ENCODE measurements at regions of chr10 and their contacts with region 1.

Region 1: DNA sequence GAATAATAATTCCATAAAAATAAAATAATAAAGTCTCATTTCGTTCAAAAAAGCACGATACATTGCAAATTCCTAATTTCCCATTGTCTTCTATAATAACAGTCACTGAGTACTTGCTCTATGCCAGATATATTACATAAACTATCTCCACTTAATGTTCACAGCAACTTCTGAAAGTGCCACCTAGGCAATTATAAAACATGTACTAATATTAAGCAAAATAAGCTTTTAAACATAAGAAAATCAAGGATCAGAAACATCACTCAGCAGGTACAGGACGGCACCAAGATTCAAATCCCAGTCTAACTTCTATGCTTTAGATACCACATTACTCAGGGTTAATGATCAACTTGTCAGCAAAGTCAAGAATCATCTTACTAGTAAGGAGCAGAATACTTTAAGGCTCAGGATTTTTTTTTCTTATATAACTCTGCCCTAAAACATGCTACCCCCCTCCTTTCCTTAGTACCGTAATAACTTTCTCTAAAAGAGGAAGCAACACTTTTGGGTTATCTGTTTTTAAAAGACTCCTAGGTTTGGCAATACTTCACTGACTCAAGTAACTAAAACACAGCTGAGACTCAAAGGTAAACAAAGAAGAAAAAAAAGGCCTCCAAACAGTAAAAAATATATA is 51.3 kb downstream of the USP6NL start:
- DNase-seq: no peak
- ATAC-seq: peak; percentile 79
- H3K4me3 Mint-ChIP-seq: peak overlapping the region; percentile 64
- H3K27ac Mint-ChIP-seq: peak overlapping the region; percentile 88
- H3K4me1 Mint-ChIP-seq: peaks cover 91% of the 10 kb centered on the region
- H3K27me3 Mint-ChIP-seq: no peaks in the 10 kb centered on the region
- CTCF ChIP-seq: no peak

Region 2: GRCh38 chr10:11578802-11579255 is 18.6 kb after region 1 on chr10:
- CTCF ChIA-PET with region 1: no interaction called
- POLR2A ChIA-PET with region 1: interaction called, 11 read pairs
- intact Hi-C with region 1: loop called (anchors 2 kb)
- DNase-seq: no peak
- ATAC-seq: peak; percentile 72
- H3K4me3 Mint-ChIP-seq: peak overlapping the region; percentile 46
- H3K27ac Mint-ChIP-seq: peak overlapping the region; percentile 67
- H3K4me1 Mint-ChIP-seq: peaks cover 75% of the 10 kb centered on the region
- H3K27me3 Mint-ChIP-seq: no peaks in the 10 kb centered on the region
- CTCF ChIP-seq: no peak

Region 3: DNA sequence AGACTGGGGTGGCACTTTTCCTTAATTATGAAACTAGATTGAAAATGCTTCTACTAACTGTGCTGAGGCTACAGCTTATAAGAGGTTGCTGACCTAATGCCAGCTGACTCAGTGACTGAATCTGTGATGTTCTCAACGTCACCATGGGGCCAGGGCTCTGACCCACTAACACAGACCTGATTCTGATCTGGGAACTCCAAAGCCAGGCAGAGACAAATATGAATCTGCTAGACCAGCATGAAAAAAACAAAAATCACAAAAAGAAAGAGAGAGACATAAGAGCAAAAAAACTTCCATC is 35.2 kb after region 1 on chr10:
- CTCF ChIA-PET with region 1: no interaction called
- POLR2A ChIA-PET with region 1: no interaction called
- intact Hi-C with region 1: loop called (anchors 2 kb)
- DNase-seq: no peak
- ATAC-seq: peak; percentile 46
- H3K4me3 Mint-ChIP-seq: peak overlapping the region; percentile 64
- H3K27ac Mint-ChIP-seq: peak overlapping the region; percentile 90
- H3K4me1 Mint-ChIP-seq: peaks cover 75% of the 10 kb centered on the region
- H3K27me3 Mint-ChIP-seq: no peaks in the 10 kb centered on the region
- CTCF ChIP-seq: no peak

Region 4: GRCh38 chr10:11724938-11725776 is 165.0 kb after region 1 on chr10:
- CTCF ChIA-PET with region 1: no interaction called
- POLR2A ChIA-PET with region 1: no interaction called
- intact Hi-C with region 1: loop called (anchors 1 kb)
- DNase-seq: no peak
- ATAC-seq: peak; percentile 95
- H3K4me3 Mint-ChIP-seq: no peak overlapping the region
- H3K27ac Mint-ChIP-seq: peak overlapping the region; percentile 79
- H3K4me1 Mint-ChIP-seq: peaks cover 29% of the 10 kb centered on the region
- H3K27me3 Mint-ChIP-seq: no peaks in the 10 kb centered on the region
- CTCF ChIP-seq: peak; percentile 45

Measured in activated B cell treated with CpG ODN at 0.5 μM for 24 hours (primary cell).